PC-3 (cell line): ENCODE measurements at regions of chr17 and their contacts with region 1.

Region 1: DNA sequence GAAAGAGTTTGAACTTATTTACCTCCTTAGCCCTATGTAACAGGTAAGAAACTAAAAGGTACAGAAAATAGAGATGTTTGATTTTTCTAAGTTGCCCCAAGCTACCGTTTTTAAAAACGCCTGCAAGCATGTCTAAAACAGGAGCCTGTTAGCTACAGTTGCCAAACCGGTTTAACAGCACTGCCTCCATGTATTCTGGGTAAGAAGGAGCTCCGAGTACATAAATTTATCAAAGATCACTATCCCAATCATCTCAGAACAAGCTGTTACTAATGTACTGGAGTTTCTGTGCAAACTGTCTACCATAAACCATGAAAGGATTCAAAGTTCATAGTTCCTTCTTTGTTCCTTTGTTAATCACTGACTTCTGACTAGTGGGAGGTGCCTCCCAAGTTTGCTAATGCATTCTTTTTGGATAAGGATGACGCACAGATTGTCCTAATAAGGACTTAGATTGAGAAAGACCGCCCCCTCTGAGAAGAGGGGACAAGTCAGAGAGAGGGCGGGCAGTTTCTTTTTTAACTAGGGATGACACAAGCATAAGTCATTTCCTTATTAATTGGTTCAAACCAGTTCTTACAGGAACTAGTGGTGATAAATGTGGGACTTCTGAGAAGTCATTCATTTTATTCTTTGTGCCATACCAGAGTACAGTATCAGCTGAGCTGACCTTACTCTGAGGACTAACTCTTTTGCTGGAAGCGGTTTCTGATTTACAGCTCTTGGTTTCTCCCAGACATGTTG is 55.3 kb downstream of the TUBD1 start:
- DNase-seq: peak; percentile 100
- ATAC-seq: peak; percentile 75
- H3K4me3 ChIP-seq: peak overlapping the region; percentile 88
- H3K27ac ChIP-seq: peak overlapping the region; percentile 95
- H3K4me1 ChIP-seq: peaks cover 21% of the 10 kb centered on the region
- H3K27me3 ChIP-seq: no peaks in the 10 kb centered on the region
- CTCF ChIP-seq: no peak

Region 2: DNA sequence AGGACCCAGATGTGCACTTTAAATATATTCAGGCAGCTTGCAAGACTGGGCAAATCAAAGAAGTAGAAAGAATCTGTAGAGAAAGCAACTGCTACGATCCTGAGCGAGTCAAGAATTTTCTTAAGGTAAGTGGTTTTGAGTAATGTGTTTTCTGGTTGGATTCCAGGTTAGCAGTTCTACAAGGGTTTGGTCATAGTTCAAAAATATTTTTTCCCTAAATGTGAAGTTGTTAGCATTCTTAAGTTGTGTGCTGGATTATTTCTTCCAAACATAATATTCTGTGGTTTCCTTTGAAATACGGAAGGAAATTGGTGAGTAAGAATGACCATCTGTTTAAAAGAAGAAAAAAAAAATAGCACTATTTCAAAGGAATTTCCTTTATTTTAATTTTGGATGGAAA is 168.7 kb before region 1 on chr17:
- CTCF ChIA-PET with region 1: no interaction called
- POLR2A ChIA-PET with region 1: no interaction called
- intact Hi-C with region 1: no loop called
- DNase-seq: peak; percentile 93
- ATAC-seq: peak; percentile 68
- H3K4me3 ChIP-seq: peak overlapping the region; percentile 37
- H3K27ac ChIP-seq: peak overlapping the region; percentile 44
- H3K4me1 ChIP-seq: peaks cover 57% of the 10 kb centered on the region
- H3K27me3 ChIP-seq: no peaks in the 10 kb centered on the region
- CTCF ChIP-seq: no peak

Region 3: DNA sequence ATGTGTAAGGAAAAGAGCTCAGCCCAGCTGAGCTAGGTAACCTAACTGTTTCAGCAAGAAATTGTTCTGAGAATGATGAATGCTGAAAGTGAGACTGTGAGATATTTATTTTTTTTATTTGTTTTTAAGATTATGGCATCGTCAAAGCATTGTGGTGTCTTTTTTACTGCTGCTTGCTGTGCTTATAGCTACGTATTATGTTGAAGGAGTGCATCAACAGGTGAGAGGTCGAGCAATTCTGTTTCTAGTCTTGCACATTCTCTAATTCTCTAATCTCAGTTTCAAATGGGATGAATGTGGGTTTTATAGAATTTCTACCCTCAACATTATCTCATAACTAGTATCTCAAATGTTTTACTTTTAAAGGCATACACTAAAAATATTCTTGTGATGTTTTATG is 100.2 kb before region 1 on chr17:
- CTCF ChIA-PET with region 1: no interaction called
- POLR2A ChIA-PET with region 1: interaction called, 24 read pairs
- intact Hi-C with region 1: no loop called
- DNase-seq: no peak
- ATAC-seq: no peak
- H3K4me3 ChIP-seq: no peak overlapping the region
- H3K27ac ChIP-seq: no peak overlapping the region
- H3K4me1 ChIP-seq: no peaks in the 10 kb centered on the region
- H3K27me3 ChIP-seq: no peaks in the 10 kb centered on the region
- CTCF ChIP-seq: no peak

Region 4: DNA sequence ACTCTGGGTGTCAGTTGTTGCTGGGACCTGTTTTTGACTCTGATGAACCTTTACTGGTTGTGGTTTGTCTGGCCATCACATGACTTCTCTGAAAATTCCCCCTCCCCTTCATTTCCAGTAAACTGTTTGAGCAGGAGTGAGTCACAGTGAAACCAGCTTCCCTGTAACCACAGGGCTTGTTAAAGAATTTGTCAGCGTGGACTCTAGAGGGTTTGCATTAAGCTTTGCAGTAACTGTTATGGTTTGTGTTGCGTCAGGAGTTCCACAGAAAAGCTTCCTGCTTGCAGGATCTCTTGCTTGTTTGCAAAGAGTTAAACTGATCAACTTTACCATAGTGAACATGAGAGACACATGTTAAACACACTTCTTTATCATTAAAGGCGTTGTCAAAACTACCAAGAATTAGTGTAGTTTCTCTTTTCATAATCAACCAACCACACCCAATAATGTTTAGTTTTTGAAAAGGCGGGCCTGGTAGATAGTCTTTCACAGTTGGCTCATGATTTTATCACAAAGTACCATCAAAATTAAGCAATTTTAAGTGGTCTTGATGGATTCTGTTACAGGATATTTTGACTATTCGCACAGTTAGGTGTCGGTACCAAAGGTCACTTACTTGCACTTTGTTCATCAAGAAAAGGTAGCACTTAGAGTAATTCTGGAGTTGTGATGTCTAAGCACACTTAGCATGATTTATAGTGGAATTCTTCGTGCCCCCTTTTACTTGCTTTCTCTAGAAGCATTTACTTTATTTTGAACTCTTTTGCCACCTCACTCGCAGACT is 50.8 kb before region 1 on chr17:
- CTCF ChIA-PET with region 1: no interaction called
- POLR2A ChIA-PET with region 1: interaction called, 113 read pairs
- intact Hi-C with region 1: loop called (anchors 1 kb)
- DNase-seq: peak; percentile 100
- ATAC-seq: peak; percentile 83
- H3K4me3 ChIP-seq: peak overlapping the region; percentile 42
- H3K27ac ChIP-seq: peak overlapping the region; percentile 88
- H3K4me1 ChIP-seq: peaks cover 62% of the 10 kb centered on the region
- H3K27me3 ChIP-seq: no peaks in the 10 kb centered on the region
- CTCF ChIP-seq: no peak

Region 5: GRCh38 chr17:59853168-59853918 is 15.9 kb after region 1 on chr17:
- CTCF ChIA-PET with region 1: interaction called, 16 read pairs
- POLR2A ChIA-PET with region 1: interaction called, 46 read pairs
- intact Hi-C with region 1: no loop called
- DNase-seq: peak; percentile 100
- ATAC-seq: peak; percentile 90
- H3K4me3 ChIP-seq: no peak overlapping the region
- H3K27ac ChIP-seq: peak overlapping the region; percentile 92
- H3K4me1 ChIP-seq: peaks cover 62% of the 10 kb centered on the region
- H3K27me3 ChIP-seq: no peaks in the 10 kb centered on the region
- CTCF ChIP-seq: peak; percentile 90

Region 6: DNA sequence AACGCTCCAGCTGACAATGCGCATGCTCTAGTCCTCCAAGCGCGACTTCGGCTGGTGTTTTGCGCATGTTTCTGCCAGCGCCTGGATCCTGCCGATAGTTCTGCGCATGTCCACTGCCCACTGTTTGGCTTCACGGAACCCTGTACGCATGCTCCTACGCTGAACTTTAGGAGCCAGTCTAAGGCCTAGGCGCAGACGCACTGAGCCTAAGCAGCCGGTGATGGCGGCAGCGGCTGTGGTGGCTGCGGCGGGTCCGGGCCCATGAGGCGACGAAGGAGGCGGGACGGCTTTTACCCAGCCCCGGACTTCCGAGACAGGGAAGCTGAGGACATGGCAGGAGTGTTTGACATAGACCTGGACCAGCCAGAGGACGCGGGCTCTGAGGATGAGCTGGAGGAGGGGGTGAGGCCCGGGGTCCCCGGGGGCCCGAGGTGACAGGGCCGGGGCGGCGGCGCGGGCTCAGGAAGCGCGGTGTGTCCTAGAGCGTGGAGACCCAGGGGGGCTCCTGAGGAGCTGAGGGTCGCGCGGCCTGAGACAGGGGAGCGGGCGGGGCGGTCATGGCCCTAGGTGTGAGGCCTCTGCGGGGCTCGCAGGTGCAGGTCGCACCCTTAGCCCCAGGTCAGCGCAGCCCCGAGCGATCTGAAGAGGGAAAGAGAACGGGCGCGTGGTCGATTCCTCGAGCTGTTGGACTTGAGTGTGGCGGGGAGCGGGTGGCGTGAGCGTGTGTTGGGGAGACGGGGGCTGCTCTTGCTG is 55.6 kb after region 1 on chr17 and contains the starts of genes RPS6KB1 and TUBD1:
- CTCF ChIA-PET with region 1: no interaction called
- POLR2A ChIA-PET with region 1: no interaction called
- intact Hi-C with region 1: no loop called
- DNase-seq: peak; percentile 100
- ATAC-seq: peak; percentile 95
- H3K4me3 ChIP-seq: peak within 1 kb of the TSS; percentile 84
- H3K27ac ChIP-seq: peak within 1 kb of the TSS; percentile 39
- H3K4me1 ChIP-seq: peaks cover 31% of the 10 kb centered on the region
- H3K27me3 ChIP-seq: no peaks in the 10 kb centered on the region
- CTCF ChIP-seq: no peak
- total RNA-seq, gene RPS6KB1: 43.4 and 51.5 TPM in 2 replicates
- total RNA-seq, gene TUBD1: 8.2 and 11.0 TPM in 2 replicates

Region 7: GRCh38 chr17:59950049-59950448 is 112.6 kb after region 1 on chr17:
- CTCF ChIA-PET with region 1: no interaction called
- POLR2A ChIA-PET with region 1: no interaction called
- intact Hi-C with region 1: no loop called
- DNase-seq: no peak
- ATAC-seq: no peak
- H3K4me3 ChIP-seq: no peak overlapping the region
- H3K27ac ChIP-seq: no peak overlapping the region
- H3K4me1 ChIP-seq: no peaks in the 10 kb centered on the region
- H3K27me3 ChIP-seq: no peaks in the 10 kb centered on the region
- CTCF ChIP-seq: no peak